ENCODE measurements at regions of chr10 and their contacts with region 1.

Region 1: GRCh38 chr10:369513-370221 is 234.4 kb downstream of the ZMYND11 start:
- DNase-seq: no peak
- H3K4me3 ChIP-seq: no peak overlapping the region
- H3K27ac ChIP-seq: no peak overlapping the region
- H3K4me1 ChIP-seq: peaks cover 38% of the 10 kb centered on the region
- CTCF ChIP-seq: no peak

Region 2: DNA sequence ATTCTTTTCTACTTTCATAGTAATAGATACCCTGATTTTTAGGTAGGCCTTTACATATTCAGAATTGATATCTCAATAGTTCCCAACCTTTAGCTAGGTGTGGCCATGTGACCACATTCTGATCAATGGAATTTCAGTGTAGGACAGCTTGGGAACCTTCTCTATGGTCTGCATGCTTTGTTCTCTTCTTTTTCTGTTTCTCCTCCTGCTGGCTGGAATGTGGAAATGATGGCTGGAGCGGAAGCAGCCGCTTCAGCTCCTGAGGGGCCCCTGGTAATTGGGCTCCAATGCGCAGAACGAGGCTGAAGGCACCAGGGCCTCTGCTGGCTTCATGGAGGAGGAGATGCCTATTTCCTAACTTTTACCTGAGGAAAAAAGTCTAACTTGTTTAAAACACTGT is 81.9 kb before region 1 on chr10:
- CTCF ChIA-PET with region 1: no interaction called
- POLR2A ChIA-PET with region 1: no interaction called
- intact Hi-C with region 1: loop called (anchors 2 kb)
- DNase-seq: no peak
- H3K4me3 ChIP-seq: peak overlapping the region; percentile 36
- H3K27ac ChIP-seq: peak overlapping the region; percentile 94
- H3K4me1 ChIP-seq: peaks cover 73% of the 10 kb centered on the region
- CTCF ChIP-seq: peak; percentile 26; the same call in 1 of the 2 replicates

Region 3: DNA sequence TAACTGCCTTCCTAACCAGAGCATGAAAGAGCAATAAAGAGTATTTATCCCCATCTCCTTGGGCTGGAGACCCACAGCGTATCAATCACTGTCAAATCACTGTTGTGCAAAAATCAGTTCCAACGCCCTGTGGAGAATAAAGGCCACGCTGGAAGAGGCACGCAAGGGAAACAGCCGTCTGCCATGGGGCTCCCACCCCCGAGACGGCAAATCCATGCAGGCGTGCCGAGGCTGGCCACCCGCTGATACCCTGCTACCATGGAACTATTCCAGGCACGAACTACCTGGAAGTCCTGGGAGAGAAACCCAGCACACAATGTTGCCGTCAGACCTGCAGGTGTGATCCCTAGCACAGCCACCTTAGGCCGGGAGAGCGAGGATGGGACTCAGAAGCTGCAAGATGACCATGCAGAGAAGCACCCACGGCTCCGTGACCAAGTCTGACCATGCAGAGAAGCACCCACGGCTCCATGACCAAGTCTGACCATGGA is 134.5 kb after region 1 on chr10:
- CTCF ChIA-PET with region 1: no interaction called
- POLR2A ChIA-PET with region 1: no interaction called
- intact Hi-C with region 1: loop called (anchors 1 kb)
- DNase-seq: no peak
- H3K4me3 ChIP-seq: no peak overlapping the region
- H3K27ac ChIP-seq: no peak overlapping the region
- H3K4me1 ChIP-seq: peaks cover 34% of the 10 kb centered on the region
- CTCF ChIP-seq: no peak

Region 4: DNA sequence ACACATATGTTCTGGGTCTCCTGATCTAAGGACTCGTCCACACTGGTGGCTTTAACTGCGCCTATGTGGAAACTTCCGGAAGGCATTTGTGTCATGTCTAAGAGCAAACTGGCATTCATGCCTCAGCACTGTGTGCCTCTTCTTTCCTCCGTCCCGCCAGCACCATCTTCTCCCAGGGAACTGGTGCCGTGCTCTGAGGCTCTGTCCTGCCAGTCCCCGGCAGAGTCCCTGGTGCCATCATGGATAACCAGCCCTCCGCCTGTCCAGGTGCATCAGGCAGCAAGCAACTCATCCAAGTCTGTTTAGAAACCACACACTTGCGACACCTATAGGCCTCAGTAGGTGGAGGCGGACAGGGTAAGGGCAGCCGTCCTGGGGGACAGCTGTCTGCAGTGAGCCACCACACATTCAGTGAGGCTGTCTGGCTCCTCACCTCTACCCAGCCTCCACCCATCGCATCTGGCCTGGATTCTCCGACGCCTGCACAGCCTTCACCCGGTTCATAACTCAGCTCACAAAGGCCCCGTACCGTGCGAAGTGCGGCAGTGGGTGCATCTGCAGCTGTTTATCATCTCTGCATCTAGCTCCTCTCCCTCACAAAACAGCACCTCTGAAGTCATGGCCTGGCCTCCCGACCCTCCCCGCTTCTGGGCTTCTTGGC is 157.1 kb after region 1 on chr10:
- CTCF ChIA-PET with region 1: no interaction called
- POLR2A ChIA-PET with region 1: interaction called, 3 read pairs
- intact Hi-C with region 1: loop called (anchors 5 kb)
- DNase-seq: peak; percentile 87
- H3K4me3 ChIP-seq: peak overlapping the region; percentile 24
- H3K27ac ChIP-seq: peak overlapping the region; percentile 49
- H3K4me1 ChIP-seq: peaks cover 59% of the 10 kb centered on the region
- CTCF ChIP-seq: peak; percentile 88